ENCODE measurements at regions of chr7 and their contacts with region 1.

Region 1: GRCh38 chr7:148485618-148486017 is 104.9 kb upstream of the C7orf33 start:
- DNase-seq: no peak
- H3K4me3 ChIP-seq: no peak overlapping the region
- H3K27ac ChIP-seq: peak overlapping the region in 5 of 59 donors; percentile 9 to 49 (median 31)
- H3K27me3 ChIP-seq: no peaks in the 10 kb centered on the region
- CTCF ChIP-seq: peak; percentile 7 to 73 (median 50)

Region 2: DNA sequence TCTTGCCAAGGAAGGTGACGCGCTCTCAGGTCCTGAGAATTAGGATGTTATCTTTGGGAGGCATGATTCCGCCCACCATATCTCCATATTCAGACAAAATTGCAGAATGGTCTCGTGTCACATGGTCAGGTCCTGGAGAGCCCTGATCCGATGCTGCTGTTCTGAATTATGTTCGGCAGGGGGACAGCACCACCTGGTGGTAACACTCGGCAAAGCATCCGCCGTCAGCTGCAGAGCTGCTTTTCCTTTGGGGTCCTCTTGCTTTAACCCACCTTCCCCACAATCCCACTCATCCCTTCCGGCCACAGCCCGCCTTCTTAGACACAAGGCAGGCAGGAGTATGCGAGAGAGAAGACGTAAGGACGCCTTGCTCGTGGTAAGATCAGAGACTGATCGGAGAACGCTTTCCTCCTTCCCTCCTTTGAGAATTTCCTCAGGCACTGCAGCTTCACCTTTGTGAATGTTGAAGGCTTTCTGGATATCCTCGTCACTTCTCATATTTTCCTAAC is 222.8 kb before region 1 on chr7:
- intact Hi-C with region 1: loop called (anchors 2 to 5 kb)
- DNase-seq: peak; percentile 62 to 88 (median 78)
- H3K4me3 ChIP-seq: peak overlapping the region in 58 of 59 donors; percentile 3 to 61 (median 40)
- H3K27ac ChIP-seq: peak overlapping the region in 36 of 59 donors; percentile 1 to 80 (median 54)
- H3K27me3 ChIP-seq: no peaks in the 10 kb centered on the region
- CTCF ChIP-seq: peak; percentile 84 to 99 (median 96)

Region 3: DNA sequence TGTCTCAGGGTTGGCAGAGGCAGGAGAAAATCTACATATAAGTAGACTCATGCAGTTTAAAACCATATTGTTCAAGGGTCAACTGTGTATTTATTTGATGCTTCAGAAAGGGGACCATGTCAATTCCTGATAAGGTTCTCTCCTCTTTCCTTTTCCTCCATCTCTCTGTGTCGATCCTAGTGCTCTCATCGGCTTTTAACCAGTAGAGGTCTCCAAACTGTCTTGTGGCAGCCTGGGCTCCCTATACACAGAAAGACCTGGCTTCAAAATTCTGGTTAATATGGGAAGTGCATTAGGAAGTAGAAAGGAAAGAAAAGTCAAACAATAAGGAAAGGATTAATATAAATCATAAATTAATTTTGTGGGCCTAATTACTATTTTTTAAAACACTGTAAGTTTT is 199.5 kb before region 1 on chr7:
- intact Hi-C with region 1: loop called in 1 of 2 experiments (anchors 5 kb)
- DNase-seq: no peak
- H3K4me3 ChIP-seq: no peak overlapping the region
- H3K27ac ChIP-seq: no peak overlapping the region
- H3K27me3 ChIP-seq: no peaks in the 10 kb centered on the region
- CTCF ChIP-seq: peak in 53 of 56 donors; percentile 23 to 75 (median 48)

Region 4: DNA sequence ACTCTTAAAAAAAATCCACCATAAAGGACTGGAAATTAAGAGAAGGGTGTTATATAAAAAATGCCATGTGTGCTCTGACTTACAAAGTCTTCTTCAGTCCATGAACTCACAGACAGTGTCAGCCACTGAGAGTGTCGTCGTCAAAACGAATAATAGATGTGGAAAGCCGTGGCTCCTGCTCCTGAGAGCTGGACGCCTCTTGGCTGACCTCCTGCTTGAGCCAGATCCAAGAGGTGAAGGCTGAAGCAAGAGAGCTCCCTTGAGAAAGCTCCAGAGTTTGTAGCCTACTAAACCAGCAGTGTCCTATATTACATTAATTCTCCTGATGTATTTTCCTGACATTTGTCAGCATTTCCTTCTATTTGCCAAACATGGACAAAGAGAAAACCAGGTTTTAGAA is 129.3 kb before region 1 on chr7:
- intact Hi-C with region 1: no loop called
- DNase-seq: no peak
- H3K4me3 ChIP-seq: no peak overlapping the region
- H3K27ac ChIP-seq: no peak overlapping the region
- H3K27me3 ChIP-seq: no peaks in the 10 kb centered on the region
- CTCF ChIP-seq: no peak

Region 5: DNA sequence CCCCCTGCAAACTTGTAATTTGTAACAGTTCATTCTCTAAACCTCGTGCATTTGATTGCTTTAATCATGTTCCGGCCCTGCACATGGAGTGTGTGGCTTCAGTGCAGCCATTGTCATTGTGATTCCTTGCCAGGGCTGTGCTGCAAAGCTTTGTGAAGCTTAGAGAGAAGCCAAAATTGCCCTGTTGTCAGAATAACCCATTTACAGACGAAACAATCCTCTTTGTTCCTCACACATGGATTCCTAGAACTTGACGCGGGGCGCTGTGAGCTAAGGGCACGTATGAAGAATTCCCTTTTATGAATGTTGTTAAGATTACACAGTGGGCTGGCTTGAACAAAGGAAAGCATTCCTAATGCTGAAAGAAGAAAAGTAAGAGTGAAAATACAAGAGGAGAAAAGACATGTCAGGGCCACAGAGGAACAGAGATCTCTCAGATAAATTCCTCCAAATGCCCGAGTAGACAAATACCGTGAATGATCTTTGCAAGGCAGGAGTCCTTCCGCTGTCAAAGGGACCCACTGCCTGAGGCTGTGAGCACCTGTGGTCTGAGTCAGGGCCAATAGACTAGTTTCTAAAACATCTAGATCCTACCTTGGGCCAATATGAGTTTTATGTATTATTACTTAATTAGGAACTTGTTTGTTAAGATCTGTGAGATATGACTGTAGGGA is 100.5 kb before region 1 on chr7:
- intact Hi-C with region 1: loop called in 1 of 2 experiments (anchors 2 kb)
- DNase-seq: peak in 9 of 10 donors; percentile 34 to 82 (median 67)
- H3K4me3 ChIP-seq: peak overlapping the region in 20 of 59 donors; percentile 3 to 51 (median 13)
- H3K27ac ChIP-seq: peak overlapping the region in 55 of 59 donors; percentile 12 to 93 (median 79)
- H3K27me3 ChIP-seq: no peaks in the 10 kb centered on the region
- CTCF ChIP-seq: peak in 23 of 56 donors; percentile 7 to 52 (median 25)

Region 6: DNA sequence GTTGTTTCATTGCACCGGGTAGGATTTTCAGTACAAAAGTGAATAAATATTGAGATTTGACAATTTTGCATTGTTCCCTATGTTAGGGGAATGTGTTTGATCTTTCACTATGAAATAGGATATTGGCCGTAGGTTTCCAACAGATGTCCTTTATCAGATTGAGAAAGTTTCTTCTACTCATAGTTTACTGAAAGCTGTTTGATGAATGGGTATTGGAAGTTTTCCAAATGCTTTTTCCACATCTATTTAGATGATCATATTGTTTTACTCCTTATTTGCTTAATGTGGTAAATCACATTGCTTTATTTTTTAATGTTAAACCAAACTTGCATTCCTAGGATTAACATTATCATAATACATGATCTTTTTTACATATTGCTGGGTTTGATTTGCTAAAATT is 72.9 kb before region 1 on chr7:
- intact Hi-C with region 1: no loop called
- DNase-seq: no peak
- H3K4me3 ChIP-seq: no peak overlapping the region
- H3K27ac ChIP-seq: no peak overlapping the region
- H3K27me3 ChIP-seq: no peaks in the 10 kb centered on the region
- CTCF ChIP-seq: no peak

Region 7: DNA sequence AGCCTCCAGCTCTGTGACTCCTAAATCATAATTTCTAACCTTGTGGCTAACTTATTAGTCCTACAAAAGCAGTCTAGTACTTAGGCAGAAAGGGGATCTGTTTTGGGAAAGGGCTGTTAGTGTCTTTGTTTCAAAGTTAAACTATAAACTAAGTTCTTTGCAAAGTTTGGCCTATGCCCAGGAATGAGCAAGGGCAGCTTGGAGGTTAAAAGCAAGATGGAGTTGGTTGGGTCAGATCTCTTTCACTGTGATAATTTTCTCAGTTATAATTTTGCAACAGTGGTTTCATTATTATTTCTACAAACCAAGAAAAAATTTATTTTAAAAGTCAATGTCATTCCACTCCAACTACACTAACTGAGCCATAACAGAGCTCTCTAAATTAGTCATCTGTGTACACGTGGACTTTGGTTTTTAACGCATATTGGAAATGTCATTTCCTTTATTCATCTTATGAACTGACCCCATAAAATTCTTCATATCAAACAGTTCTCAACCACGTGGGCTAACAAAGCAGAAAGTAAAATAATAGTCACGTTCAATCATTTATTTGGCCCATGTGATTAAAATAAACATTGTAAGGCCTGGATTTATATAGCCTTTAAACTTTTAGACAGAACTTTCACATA is 38.3 kb before region 1 on chr7:
- intact Hi-C with region 1: loop called in 1 of 2 experiments (anchors 2 kb)
- DNase-seq: no peak
- H3K4me3 ChIP-seq: no peak overlapping the region
- H3K27ac ChIP-seq: no peak overlapping the region
- H3K27me3 ChIP-seq: no peaks in the 10 kb centered on the region
- CTCF ChIP-seq: no peak

Region 8: DNA sequence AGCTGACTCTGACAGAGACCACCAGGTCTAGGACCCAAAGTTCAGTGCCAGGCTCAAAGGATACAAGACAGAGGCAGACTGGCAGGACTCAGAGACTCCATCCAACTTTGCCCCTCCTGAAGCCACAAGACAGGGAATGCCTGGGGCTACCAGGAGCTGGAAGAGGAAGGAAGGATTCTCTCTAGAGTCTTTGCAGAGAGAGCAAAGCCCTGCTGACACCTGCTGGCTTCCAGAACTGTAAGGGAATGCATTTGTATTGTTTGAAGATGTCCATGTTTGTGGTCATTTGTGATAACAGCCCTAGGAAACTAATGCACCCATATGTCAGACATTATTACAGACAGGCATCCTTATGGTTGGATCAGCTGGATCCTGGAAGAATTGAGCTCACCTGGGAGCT is 27.4 kb before region 1 on chr7:
- intact Hi-C with region 1: no loop called
- DNase-seq: no peak
- H3K4me3 ChIP-seq: no peak overlapping the region
- H3K27ac ChIP-seq: no peak overlapping the region
- H3K27me3 ChIP-seq: peaks cover 0 to 6% (median 0%) of the 10 kb centered on the region in 45 donors
- CTCF ChIP-seq: no peak

Measured in dorsolateral prefrontal cortex (tissue), 120 donors.